Activated naive CD4-positive, alpha-beta T cell treated with anti-CD3 and anti-CD28 coated beads for 36 hours (primary cell): ENCODE measurements at regions of chr20 and their contacts with region 1.

Region 1: DNA sequence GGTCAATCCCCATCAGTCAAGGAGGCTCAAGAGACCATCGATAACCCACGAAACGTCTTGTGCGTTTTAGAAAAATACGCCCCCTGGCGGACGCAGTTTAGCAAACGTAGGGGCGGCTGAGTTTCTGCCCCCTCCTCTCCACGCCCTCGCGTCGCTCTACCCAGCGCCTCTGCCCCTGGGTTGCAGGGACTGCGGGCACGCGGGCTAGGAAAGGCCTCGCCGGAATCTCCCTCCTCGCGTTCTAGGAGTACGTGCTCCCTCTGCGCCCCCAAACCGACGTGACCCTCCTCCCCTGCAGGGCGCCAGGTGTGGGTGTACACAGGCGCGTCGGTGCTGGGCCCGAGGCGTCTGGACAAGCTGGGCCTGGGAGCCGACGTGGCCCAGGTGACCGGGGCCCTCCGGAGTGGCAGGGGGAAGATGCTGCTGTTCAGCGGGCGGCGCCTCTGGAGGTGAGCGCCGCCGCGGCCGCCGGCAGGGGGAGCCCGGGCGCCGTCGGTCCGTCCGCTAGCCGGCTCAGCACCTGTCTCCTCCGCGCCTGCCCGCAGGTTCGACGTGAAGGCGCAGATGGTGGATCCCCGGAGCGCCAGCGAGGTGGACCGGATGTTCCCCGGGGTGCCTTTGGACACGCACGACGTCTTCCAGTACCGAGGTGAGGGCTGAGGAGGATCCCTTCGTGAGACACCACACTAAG is 5.3 kb downstream of the MMP9 start:
- DNase-seq: peak; percentile 71
- H3K4me3 Mint-ChIP-seq: no peak overlapping the region
- H3K27ac Mint-ChIP-seq: no peak overlapping the region
- H3K4me1 Mint-ChIP-seq: peaks cover 36% of the 10 kb centered on the region
- H3K27me3 Mint-ChIP-seq: peaks cover 42% of the 10 kb centered on the region

Region 2: DNA sequence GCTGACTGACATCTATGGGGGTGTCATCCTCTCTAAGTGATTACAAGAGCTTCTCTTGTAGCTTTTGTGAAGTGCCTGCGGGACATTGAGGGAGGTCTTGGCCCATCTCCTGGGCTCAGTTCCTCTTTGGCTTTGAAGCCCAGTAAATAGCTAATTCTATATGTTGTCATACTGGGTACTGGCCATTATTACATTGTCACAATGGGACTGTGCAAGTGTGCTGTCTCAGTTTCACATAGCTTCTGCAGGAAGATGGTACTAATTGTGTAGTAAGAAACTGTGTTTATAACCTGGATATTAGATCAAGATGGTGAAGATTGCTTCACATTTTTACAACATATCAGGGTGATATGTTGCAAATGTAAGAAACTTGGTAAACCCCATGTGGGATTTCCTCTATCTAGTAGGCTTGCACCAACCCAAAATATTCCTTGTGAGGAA is 518.5 kb before region 1 on chr20:
- CTCF ChIA-PET with region 1: no interaction called
- intact Hi-C with region 1: no loop called
- DNase-seq: no peak
- H3K4me3 Mint-ChIP-seq: no peak overlapping the region
- H3K27ac Mint-ChIP-seq: no peak overlapping the region
- H3K4me1 Mint-ChIP-seq: no peaks in the 10 kb centered on the region
- H3K27me3 Mint-ChIP-seq: peaks cover 18% of the 10 kb centered on the region

Region 3: DNA sequence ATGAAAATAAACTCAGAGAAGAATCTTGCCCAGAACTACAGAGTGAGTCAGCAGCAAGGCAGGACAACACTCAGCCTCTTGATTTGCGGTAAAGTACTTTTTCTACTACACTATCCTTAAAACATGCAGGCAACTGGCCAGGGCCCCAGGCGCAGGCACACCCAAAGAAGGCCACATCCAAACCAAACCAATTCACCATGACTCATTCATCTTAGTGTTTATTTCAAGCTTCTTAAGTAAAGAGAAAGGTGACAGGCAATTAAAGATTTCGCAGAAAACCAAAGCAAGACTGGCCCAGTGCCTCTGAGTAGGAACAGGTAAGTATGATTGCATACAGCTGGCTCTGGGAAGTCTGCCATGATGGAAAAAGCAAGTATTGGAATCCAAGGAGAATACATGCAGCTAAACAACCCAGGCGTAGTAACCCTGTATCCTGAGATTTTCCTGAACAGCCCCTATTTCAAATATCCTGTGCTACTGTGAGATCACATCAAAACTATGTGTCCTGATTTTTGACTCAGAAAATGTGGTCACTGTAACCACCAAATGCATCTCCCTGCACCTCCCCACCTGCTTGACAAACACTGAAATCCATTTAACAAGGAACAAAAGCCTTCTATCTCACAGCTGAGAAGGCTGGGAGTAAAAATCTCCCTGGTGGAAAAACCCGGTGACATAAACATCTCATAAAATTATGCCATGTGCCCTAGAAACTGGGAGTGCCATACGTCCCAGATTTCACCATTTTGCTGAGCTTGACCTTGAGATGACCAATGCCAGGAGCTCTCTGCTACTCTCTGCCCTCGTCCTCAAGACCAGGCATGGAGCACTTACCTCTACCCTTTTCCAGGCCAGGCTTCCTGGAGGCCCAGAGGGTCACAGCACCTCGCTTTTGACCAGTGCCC is 234.7 kb before region 1 on chr20:
- CTCF ChIA-PET with region 1: no interaction called
- intact Hi-C with region 1: no loop called
- DNase-seq: no peak
- H3K4me3 Mint-ChIP-seq: no peak overlapping the region
- H3K27ac Mint-ChIP-seq: no peak overlapping the region
- H3K4me1 Mint-ChIP-seq: peaks cover 8% of the 10 kb centered on the region
- H3K27me3 Mint-ChIP-seq: no peaks in the 10 kb centered on the region

Region 4: GRCh38 chr20:45987108-45987780 is 26.7 kb before region 1 on chr20:
- CTCF ChIA-PET with region 1: interaction called, 101 read pairs
- intact Hi-C with region 1: loop called (anchors 1 kb)
- DNase-seq: peak; percentile 85
- H3K4me3 Mint-ChIP-seq: no peak overlapping the region
- H3K27ac Mint-ChIP-seq: no peak overlapping the region
- H3K4me1 Mint-ChIP-seq: peaks cover 2% of the 10 kb centered on the region
- H3K27me3 Mint-ChIP-seq: no peaks in the 10 kb centered on the region

Region 5: GRCh38 chr20:46046588-46047320 is 32.8 kb after region 1 on chr20:
- CTCF ChIA-PET with region 1: no interaction called
- intact Hi-C with region 1: no loop called
- DNase-seq: no peak
- H3K4me3 Mint-ChIP-seq: no peak overlapping the region
- H3K27ac Mint-ChIP-seq: no peak overlapping the region
- H3K4me1 Mint-ChIP-seq: no peaks in the 10 kb centered on the region
- H3K27me3 Mint-ChIP-seq: peaks cover 26% of the 10 kb centered on the region

Region 6: GRCh38 chr20:46089417-46090388 is 75.7 kb after region 1 on chr20 and contains the start of gene NCOA5:
- CTCF ChIA-PET with region 1: interaction called, 6 read pairs
- intact Hi-C with region 1: loop called (anchors 1 kb)
- DNase-seq: peak; percentile 96
- H3K4me3 Mint-ChIP-seq: peak within 1 kb of the TSS; percentile 86
- H3K27ac Mint-ChIP-seq: peak within 1 kb of the TSS; percentile 77
- H3K4me1 Mint-ChIP-seq: peaks cover 47% of the 10 kb centered on the region
- H3K27me3 Mint-ChIP-seq: no peaks in the 10 kb centered on the region
- total RNA-seq, gene NCOA5: 4.4 to 5.1 TPM

Region 7: GRCh38 chr20:46174469-46175128 is 160.6 kb after region 1 on chr20:
- CTCF ChIA-PET with region 1: interaction called, 19 read pairs
- intact Hi-C with region 1: no loop called
- DNase-seq: peak; percentile 80
- H3K4me3 Mint-ChIP-seq: no peak overlapping the region
- H3K27ac Mint-ChIP-seq: no peak overlapping the region
- H3K4me1 Mint-ChIP-seq: no peaks in the 10 kb centered on the region
- H3K27me3 Mint-ChIP-seq: peaks cover 44% of the 10 kb centered on the region

Region 8: GRCh38 chr20:46689082-46689754 is 675.2 kb after region 1 on chr20 and contains the start of gene TP53RK:
- CTCF ChIA-PET with region 1: no interaction called
- intact Hi-C with region 1: loop called (anchors 10 kb)
- DNase-seq: peak; percentile 99
- H3K4me3 Mint-ChIP-seq: peak within 1 kb of the TSS; percentile 90
- H3K27ac Mint-ChIP-seq: peak within 1 kb of the TSS; percentile 87
- H3K4me1 Mint-ChIP-seq: peaks cover 32% of the 10 kb centered on the region
- H3K27me3 Mint-ChIP-seq: no peaks in the 10 kb centered on the region
- total RNA-seq, gene TP53RK: 7.8 to 8.3 TPM